CD8-positive, alpha-beta T cell (primary cell): ENCODE measurements at regions of chr13 and their contacts with region 1.

Region 1: GRCh38 chr13:104580931-104581330 is 1514.7 kb upstream of the SLC10A2 start:
- DNase-seq: no peak
- ATAC-seq: no peak
- H3K4me3 ChIP-seq: no peak overlapping the region
- H3K4me3 Mint-ChIP-seq: no peak overlapping the region
- H3K27ac ChIP-seq: no peak overlapping the region
- H3K27ac Mint-ChIP-seq: no peak overlapping the region
- H3K4me1 ChIP-seq: no peaks in the 10 kb centered on the region
- H3K4me1 Mint-ChIP-seq: no peaks in the 10 kb centered on the region
- H3K27me3 ChIP-seq: no peaks in the 10 kb centered on the region
- H3K27me3 Mint-ChIP-seq: no peaks in the 10 kb centered on the region
- CTCF ChIP-seq: no peak

Region 2: GRCh38 chr13:104594806-104595205 is 13.9 kb after region 1 on chr13:
- CTCF ChIA-PET with region 1: no interaction called
- POLR2A ChIA-PET with region 1: no interaction called
- intact Hi-C with region 1: loop called in 1 of 2 experiments (anchors 2 kb)
- DNase-seq: no peak
- ATAC-seq: no peak
- H3K4me3 ChIP-seq: no peak overlapping the region
- H3K4me3 Mint-ChIP-seq: no peak overlapping the region
- H3K27ac ChIP-seq: no peak overlapping the region
- H3K27ac Mint-ChIP-seq: no peak overlapping the region
- H3K4me1 ChIP-seq: no peaks in the 10 kb centered on the region
- H3K4me1 Mint-ChIP-seq: no peaks in the 10 kb centered on the region
- H3K27me3 ChIP-seq: no peaks in the 10 kb centered on the region
- H3K27me3 Mint-ChIP-seq: no peaks in the 10 kb centered on the region
- CTCF ChIP-seq: no peak

Region 3: DNA sequence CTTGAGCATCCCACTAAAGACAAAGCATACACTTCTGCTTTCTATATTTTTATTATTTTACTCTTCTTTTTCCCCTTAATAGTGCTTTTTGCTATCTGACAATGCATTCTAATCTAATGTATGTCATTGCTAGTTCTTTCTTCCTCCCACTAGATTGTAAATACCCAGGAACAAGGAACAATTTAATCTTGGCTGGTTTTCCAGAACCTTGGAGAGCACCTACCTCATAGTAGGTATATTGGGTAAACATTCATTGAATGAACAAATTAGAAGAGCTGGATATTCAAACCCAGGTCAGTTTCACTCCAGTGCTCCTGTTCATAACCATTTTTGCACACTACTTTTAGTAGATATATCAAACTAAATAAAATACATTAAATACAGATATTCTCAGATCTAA is 102.9 kb after region 1 on chr13:
- CTCF ChIA-PET with region 1: no interaction called
- POLR2A ChIA-PET with region 1: no interaction called
- intact Hi-C with region 1: no loop called
- DNase-seq: no peak
- ATAC-seq: no peak
- H3K4me3 ChIP-seq: no peak overlapping the region
- H3K4me3 Mint-ChIP-seq: no peak overlapping the region
- H3K27ac ChIP-seq: no peak overlapping the region
- H3K27ac Mint-ChIP-seq: no peak overlapping the region
- H3K4me1 ChIP-seq: no peaks in the 10 kb centered on the region
- H3K4me1 Mint-ChIP-seq: no peaks in the 10 kb centered on the region
- H3K27me3 ChIP-seq: no peaks in the 10 kb centered on the region
- H3K27me3 Mint-ChIP-seq: no peaks in the 10 kb centered on the region
- CTCF ChIP-seq: no peak

Region 4: DNA sequence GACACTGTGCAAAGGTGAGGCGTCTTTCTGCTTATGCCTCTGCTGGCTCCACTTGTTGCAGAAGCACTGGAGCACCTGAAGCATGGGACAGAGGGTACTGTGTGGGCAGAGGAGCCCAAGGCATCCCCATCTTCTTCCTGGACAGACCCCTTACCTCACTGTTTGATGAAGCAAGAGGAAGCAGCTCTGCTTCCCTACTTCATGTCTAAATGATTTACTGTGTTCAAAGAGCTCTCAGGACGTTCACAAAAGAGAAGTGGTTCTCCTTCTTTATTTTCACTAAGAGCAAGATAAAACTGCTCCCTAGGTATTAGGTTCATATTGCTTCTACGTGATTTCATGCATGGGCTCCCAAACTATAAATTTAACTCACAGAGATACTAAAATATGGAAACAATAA is 120.7 kb after region 1 on chr13:
- CTCF ChIA-PET with region 1: no interaction called
- POLR2A ChIA-PET with region 1: no interaction called
- intact Hi-C with region 1: no loop called
- DNase-seq: no peak
- ATAC-seq: no peak
- H3K4me3 ChIP-seq: no peak overlapping the region
- H3K4me3 Mint-ChIP-seq: no peak overlapping the region
- H3K27ac ChIP-seq: no peak overlapping the region
- H3K27ac Mint-ChIP-seq: no peak overlapping the region
- H3K4me1 ChIP-seq: no peaks in the 10 kb centered on the region
- H3K4me1 Mint-ChIP-seq: no peaks in the 10 kb centered on the region
- H3K27me3 ChIP-seq: no peaks in the 10 kb centered on the region
- H3K27me3 Mint-ChIP-seq: no peaks in the 10 kb centered on the region
- CTCF ChIP-seq: no peak